ENCODE measurements at regions of chr19 and their contacts with region 1.

Region 1: DNA sequence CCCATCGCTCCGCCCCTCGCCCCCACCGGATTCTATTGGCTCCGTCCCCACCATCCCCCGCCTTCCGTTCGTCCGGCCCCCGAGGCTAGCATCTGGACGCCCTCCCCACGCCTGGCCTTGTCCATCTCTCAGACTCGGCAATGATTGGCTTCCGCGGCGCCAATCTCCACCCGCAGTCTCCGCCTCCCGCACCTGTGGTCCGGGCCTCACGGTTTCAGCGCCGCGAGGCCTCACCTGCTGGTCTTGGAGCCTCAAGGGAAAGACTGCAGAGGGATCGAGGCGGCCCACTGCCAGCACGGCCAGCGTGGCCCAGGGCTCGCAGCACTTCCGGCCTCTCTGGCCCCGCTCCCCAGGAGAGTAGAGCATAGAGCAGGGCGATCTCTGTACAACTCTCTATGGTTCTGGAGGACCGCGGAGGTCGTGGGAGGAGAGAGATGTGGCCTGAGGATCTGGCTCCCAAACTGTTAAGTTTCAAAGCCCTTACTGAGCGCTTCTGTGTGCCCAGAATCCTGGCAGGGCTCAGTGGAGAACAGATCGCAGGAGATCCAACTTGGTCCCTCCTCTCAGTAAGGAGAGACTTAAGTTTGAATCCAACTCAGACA is at the start of gene ERCC1:
- DNase-seq: peak in 1 of 2 donors; percentile 74
- ATAC-seq: peak; percentile 69 to 84 (median 78)
- H3K4me3 ChIP-seq: peak within 1 kb of the TSS; percentile 78
- H3K4me3 Mint-ChIP-seq: peak within 1 kb of the TSS; percentile 96
- H3K27ac ChIP-seq: peak within 1 kb of the TSS; percentile 84
- H3K27ac Mint-ChIP-seq: peak within 1 kb of the TSS; percentile 92 to 96
- H3K4me1 ChIP-seq: peaks cover 46% of the 10 kb centered on the region
- H3K4me1 Mint-ChIP-seq: peaks cover 32 to 50% of the 10 kb centered on the region in 2 donors
- H3K27me3 ChIP-seq: no peaks in the 10 kb centered on the region
- H3K27me3 Mint-ChIP-seq: peaks cover 0 to 3% of the 10 kb centered on the region in 2 donors
- CTCF ChIP-seq: no peak
- total RNA-seq, gene ERCC1: 46.8 to 55.2 (median 48.2) TPM

Region 2: GRCh38 chr19:45439569-45440254 is 16.0 kb after region 1 on chr19:
- intact Hi-C with region 1: loop called (anchors 2 kb)
- DNase-seq: peak; percentile 92 to 93
- ATAC-seq: peak; percentile 67 to 82 (median 72)
- H3K4me3 ChIP-seq: peak overlapping the region; percentile 22
- H3K4me3 Mint-ChIP-seq: peak overlapping the region; percentile 81
- H3K27ac ChIP-seq: peak overlapping the region; percentile 70
- H3K27ac Mint-ChIP-seq: peak overlapping the region; percentile 86 to 92
- H3K4me1 ChIP-seq: peaks cover 43% of the 10 kb centered on the region
- H3K4me1 Mint-ChIP-seq: peaks cover 23 to 38% of the 10 kb centered on the region in 2 donors
- H3K27me3 ChIP-seq: no peaks in the 10 kb centered on the region
- H3K27me3 Mint-ChIP-seq: no peaks in the 10 kb centered on the region
- CTCF ChIP-seq: peak; percentile 100

Region 3: DNA sequence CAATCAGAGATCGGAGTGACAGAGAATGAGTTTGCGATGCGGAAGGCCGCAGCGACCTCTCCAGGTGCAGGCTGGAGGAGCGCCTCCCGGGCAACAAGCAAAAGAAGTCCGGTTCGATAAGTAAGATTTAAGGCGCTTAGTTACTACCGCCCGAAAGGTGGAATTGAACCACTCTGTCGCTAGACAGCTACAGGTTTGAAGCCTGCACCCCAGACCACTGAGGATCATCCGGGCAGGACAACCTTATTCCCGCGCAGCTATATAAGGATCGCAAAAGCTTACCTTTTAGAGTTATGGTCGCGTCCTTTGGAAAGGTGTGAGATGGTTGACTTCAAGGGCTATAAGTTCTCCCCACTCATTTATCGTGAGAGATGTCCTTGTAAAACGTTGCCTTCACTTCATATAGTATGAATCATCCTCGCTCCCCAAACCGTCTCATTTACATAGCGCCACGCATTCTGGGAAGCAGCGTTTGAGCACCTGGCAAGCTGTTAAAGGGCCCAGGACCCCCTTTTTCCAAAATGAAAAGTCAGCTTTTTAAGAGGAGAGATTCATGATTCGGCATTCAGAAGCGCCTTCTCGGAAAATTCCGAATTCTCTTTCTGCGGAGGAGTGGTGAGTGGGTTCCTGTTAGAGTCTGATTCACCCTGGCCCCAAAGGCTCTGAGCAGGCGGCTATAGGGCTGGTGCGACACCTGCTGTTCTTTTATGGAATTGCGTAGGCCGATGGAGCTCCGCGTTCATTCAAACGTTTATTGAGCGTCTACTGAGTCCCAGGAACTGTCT is 55.0 kb after region 1 on chr19:
- intact Hi-C with region 1: loop called (anchors 1 kb)
- DNase-seq: peak; percentile 88 to 96
- ATAC-seq: peak; percentile 58 to 84 (median 67)
- H3K4me3 ChIP-seq: peak overlapping the region; percentile 60
- H3K4me3 Mint-ChIP-seq: peak overlapping the region; percentile 74
- H3K27ac ChIP-seq: peak overlapping the region; percentile 89
- H3K27ac Mint-ChIP-seq: peak overlapping the region; percentile 87 to 90
- H3K4me1 ChIP-seq: peaks cover 30% of the 10 kb centered on the region
- H3K4me1 Mint-ChIP-seq: peaks cover 42 to 55% of the 10 kb centered on the region in 2 donors
- H3K27me3 ChIP-seq: no peaks in the 10 kb centered on the region
- H3K27me3 Mint-ChIP-seq: peaks cover 0 to 10% of the 10 kb centered on the region in 2 donors
- CTCF ChIP-seq: peak; percentile 76

Region 4: DNA sequence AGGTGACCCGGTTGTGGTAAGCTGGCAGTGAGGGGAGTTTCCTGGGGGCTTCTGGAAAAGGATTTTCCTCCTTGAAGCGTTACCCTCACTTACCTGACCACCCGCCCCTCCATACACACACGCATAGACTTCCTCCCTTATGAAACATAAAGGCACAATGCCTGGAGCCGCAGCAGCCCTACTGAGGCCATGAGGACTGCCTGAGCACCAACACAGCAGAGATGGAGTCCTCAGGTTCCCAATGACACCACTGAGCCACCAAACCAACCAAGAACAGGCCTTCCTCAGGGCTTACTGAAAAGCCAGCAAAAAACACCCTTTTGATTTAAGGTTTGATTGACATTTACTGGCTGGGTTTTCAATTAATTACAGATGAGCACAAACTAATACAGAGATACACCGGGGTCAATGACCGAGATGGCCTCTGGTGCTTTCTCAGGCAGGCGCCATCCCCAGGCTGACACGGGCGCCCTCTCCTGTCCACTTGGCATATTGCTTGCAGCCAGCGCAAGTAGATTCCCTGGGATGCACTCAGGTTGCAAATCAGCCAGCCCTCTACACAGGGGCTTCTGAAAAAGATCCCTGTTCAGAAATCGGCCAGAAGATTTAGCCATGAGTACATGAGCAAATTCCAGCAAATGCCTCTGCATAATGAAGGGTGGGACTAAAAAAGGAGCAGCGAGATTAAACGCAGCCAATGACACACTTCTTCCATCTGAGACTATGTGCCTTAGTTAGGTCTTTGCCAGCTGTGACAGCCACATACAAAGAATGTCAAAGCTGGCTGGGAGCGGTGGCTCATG is 146.1 kb after region 1 on chr19:
- intact Hi-C with region 1: loop called (anchors 10 kb)
- DNase-seq: peak; percentile 50 to 69
- ATAC-seq: peak; percentile 72 to 85 (median 75)
- H3K4me3 ChIP-seq: no peak overlapping the region
- H3K4me3 Mint-ChIP-seq: no peak overlapping the region
- H3K27ac ChIP-seq: no peak overlapping the region
- H3K27ac Mint-ChIP-seq: no peak overlapping the region
- H3K4me1 ChIP-seq: no peaks in the 10 kb centered on the region
- H3K4me1 Mint-ChIP-seq: peaks cover 8 to 10% of the 10 kb centered on the region in 2 donors
- H3K27me3 ChIP-seq: no peaks in the 10 kb centered on the region
- H3K27me3 Mint-ChIP-seq: no peaks in the 10 kb centered on the region
- CTCF ChIP-seq: peak; percentile 47